ENCODE measurements at regions of chr18 and their contacts with region 1.

Region 1: GRCh38 chr18:59899298-59900221 is at the start of gene PMAIP1:
- DNase-seq: peak; percentile 78 to 93
- H3K4me3 ChIP-seq: peak within 1 kb of the TSS; percentile 66 to 93 (median 76)
- H3K27ac ChIP-seq: peak within 1 kb of the TSS; percentile 92
- H3K4me1 ChIP-seq: peaks cover 4 to 19% (median 8%) of the 10 kb centered on the region in 4 experiments; a peak in 5 of 7 replicates
- H3K27me3 ChIP-seq: peaks cover 0 to 6% (median 0%) of the 10 kb centered on the region in 4 experiments; a peak in 2 of 7 replicates
- CTCF ChIP-seq: no peak
- EP300 ChIP-seq: 0 out of 3 replicates have a peak, but pooled peaks of 1 of the 2 experiments have one; percentile 72
- POLR2A ChIP-seq: peak; percentile 99
- RAD21 ChIP-seq: no peak; a peak in 1 of 4 replicates
- total RNA-seq, gene PMAIP1: 75.1 and 84.1 TPM in 2 replicates

Region 2: DNA sequence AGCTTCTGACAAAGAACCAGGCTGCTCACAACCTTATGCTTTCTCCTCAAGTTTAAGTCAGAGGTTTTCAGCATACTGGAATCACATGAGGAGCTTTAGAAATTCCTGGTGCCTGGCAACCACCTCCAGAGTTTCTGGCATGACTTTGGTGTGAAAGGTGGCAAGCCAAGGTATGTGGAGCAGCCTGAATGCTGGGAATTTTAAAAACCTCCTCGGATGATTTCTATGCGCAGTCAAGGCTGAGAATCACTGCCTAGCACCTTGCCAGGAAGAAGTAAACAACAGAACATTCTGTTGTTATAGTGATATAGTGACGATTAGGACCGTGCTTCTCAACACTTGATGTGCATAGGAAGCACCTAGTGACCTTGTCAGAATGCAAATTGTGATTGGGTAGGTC is 214.1 kb before region 1 on chr18:
- CTCF ChIA-PET with region 1: no interaction called
- POLR2A ChIA-PET with region 1: no interaction called
- DNase-seq: no peak
- H3K4me3 ChIP-seq: no peak overlapping the region
- H3K27ac ChIP-seq: no peak overlapping the region
- H3K4me1 ChIP-seq: peaks cover 2 to 29% (median 15%) of the 10 kb centered on the region in 4 experiments; a peak in 6 of 7 replicates
- H3K27me3 ChIP-seq: peaks cover 0 to 6% (median 0%) of the 10 kb centered on the region in 4 experiments; a peak in 2 of 7 replicates
- CTCF ChIP-seq: no peak
- EP300 ChIP-seq: no peak
- POLR2A ChIP-seq: no peak
- RAD21 ChIP-seq: no peak

Region 3: DNA sequence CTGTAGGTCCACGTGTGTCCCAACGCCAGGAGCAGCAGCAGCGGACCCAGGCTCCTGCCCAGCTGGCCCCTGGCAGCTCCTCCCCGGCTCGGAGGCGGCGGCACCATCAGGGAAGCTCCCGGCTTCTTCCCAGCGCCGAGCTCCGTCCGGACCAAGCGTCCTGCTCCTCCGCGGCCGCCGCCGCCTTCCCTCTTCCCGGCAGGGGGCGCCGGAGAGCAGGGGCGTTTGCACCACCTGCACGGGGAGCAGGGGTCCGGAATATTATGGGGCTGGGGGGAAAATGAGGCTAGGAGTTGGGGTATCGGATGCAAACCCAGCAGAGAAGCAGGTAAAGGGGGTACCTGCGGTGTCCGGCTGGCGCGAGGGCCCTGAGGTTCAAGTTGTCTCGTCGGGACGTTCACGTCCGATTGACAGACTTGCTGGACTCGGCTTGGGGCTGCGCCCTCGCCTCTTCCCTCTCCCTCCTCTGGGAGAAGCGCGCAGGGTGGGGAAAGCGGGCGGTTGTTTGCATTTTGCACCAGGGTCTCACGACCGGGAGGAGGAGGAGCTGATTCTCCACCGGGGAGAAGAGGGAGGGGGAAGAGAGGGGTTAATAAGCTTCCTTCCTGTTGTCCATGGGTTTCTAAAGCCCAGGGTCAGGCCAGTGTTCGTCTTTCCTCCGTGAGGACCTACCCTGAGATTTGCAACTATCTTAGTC is 202.2 kb before region 1 on chr18 and contains the start of gene CCBE1:
- CTCF ChIA-PET with region 1: interaction called, 3 read pairs
- POLR2A ChIA-PET with region 1: interaction called, 13 read pairs
- DNase-seq: peak; percentile 49 to 96
- H3K4me3 ChIP-seq: peak within 1 kb of the TSS; percentile 65 to 80 (median 72)
- H3K27ac ChIP-seq: no peak within 1 kb of the TSS
- H3K4me1 ChIP-seq: peaks cover 7 to 34% (median 15%) of the 10 kb centered on the region in 4 experiments
- H3K27me3 ChIP-seq: peaks cover 7 to 35% (median 31%) of the 10 kb centered on the region in 4 experiments
- CTCF ChIP-seq: peak; percentile 81 to 88 (median 82)
- EP300 ChIP-seq: no peak
- POLR2A ChIP-seq: no peak
- RAD21 ChIP-seq: peak; percentile 55 to 68
- total RNA-seq, gene CCBE1: 2.6 and 4.4 TPM in 2 replicates

Region 4: GRCh38 chr18:59851784-59852399 is 47.7 kb before region 1 on chr18:
- CTCF ChIA-PET with region 1: interaction called, 3 read pairs
- POLR2A ChIA-PET with region 1: interaction called, 13 read pairs
- DNase-seq: no peak
- H3K4me3 ChIP-seq: no peak overlapping the region
- H3K27ac ChIP-seq: no peak overlapping the region
- H3K4me1 ChIP-seq: 0 out of 7 replicates have a peak, but pooled peaks cover 0 to 2% (median 0%) of the 10 kb centered on the region in 4 experiments
- H3K27me3 ChIP-seq: no peaks in the 10 kb centered on the region; a peak in 1 of 7 replicates
- CTCF ChIP-seq: no peak
- EP300 ChIP-seq: no peak
- POLR2A ChIP-seq: no peak
- RAD21 ChIP-seq: no peak

Region 5: GRCh38 chr18:59876310-59876626 is 23.3 kb before region 1 on chr18:
- CTCF ChIA-PET with region 1: interaction called, 3 read pairs
- POLR2A ChIA-PET with region 1: interaction called, 82 read pairs
- DNase-seq: no peak
- H3K4me3 ChIP-seq: no peak overlapping the region
- H3K27ac ChIP-seq: no peak overlapping the region
- H3K4me1 ChIP-seq: peaks cover 0 to 7% (median 4%) of the 10 kb centered on the region in 4 experiments; a peak in 5 of 7 replicates
- H3K27me3 ChIP-seq: no peaks in the 10 kb centered on the region
- CTCF ChIP-seq: no peak
- EP300 ChIP-seq: no peak
- POLR2A ChIP-seq: no peak
- RAD21 ChIP-seq: no peak

Region 6: GRCh38 chr18:59918320-59918755 is 18.8 kb after region 1 on chr18:
- CTCF ChIA-PET with region 1: interaction called, 5 read pairs
- POLR2A ChIA-PET with region 1: interaction called, 47 read pairs
- DNase-seq: peak in 1 of 2 experiments; percentile 44
- H3K4me3 ChIP-seq: no peak overlapping the region
- H3K27ac ChIP-seq: no peak overlapping the region
- H3K4me1 ChIP-seq: peaks cover 0 to 6% (median 2%) of the 10 kb centered on the region in 4 experiments; a peak in 3 of 7 replicates
- H3K27me3 ChIP-seq: no peaks in the 10 kb centered on the region
- CTCF ChIP-seq: no peak
- EP300 ChIP-seq: no peak
- POLR2A ChIP-seq: no peak
- RAD21 ChIP-seq: no peak

Region 7: GRCh38 chr18:59938676-59939075 is 39.1 kb after region 1 on chr18:
- CTCF ChIA-PET with region 1: no interaction called
- POLR2A ChIA-PET with region 1: interaction called, 15 read pairs
- DNase-seq: no peak
- H3K4me3 ChIP-seq: no peak overlapping the region
- H3K27ac ChIP-seq: no peak overlapping the region
- H3K4me1 ChIP-seq: 0 out of 7 replicates have a peak, but pooled peaks cover 0 to 2% (median 0%) of the 10 kb centered on the region in 4 experiments
- H3K27me3 ChIP-seq: no peaks in the 10 kb centered on the region; a peak in 1 of 7 replicates
- CTCF ChIP-seq: no peak
- EP300 ChIP-seq: no peak
- POLR2A ChIP-seq: no peak
- RAD21 ChIP-seq: no peak

Region 8: DNA sequence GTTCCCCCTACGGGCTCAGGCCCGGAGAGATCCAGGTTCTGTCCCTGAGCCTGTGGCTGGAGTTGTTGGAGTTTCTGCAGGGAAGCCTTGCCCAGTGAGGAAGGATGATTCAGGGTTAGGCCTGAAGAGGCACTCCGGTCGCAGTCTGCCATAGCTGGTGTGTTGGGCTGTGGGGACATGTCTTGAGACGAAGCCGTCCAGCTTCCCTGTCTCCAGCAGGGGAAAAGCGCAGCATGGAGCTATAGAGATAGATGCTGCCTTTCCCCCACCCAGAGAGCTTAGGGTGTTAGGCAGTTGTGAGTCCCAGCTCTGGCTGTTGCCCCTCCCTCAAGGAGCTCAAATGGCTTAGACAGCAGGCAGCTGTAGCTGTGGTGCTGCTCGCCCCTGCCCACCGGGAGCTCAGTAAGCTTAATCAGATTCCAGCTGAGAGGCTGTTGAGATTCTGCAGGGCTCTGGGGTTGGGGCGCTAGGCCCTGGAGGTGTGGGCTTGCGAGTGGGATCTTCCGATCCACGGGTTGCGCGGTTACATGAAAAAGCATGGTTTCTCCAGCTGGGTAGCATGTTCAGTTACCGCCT is 104.1 kb after region 1 on chr18:
- CTCF ChIA-PET with region 1: no interaction called
- POLR2A ChIA-PET with region 1: no interaction called
- DNase-seq: no peak
- H3K4me3 ChIP-seq: no peak overlapping the region
- H3K27ac ChIP-seq: no peak overlapping the region
- H3K4me1 ChIP-seq: peaks cover 0 to 2% (median 0%) of the 10 kb centered on the region in 4 experiments; a peak in 1 of 7 replicates
- H3K27me3 ChIP-seq: no peaks in the 10 kb centered on the region
- CTCF ChIP-seq: no peak
- EP300 ChIP-seq: no peak
- POLR2A ChIP-seq: no peak
- RAD21 ChIP-seq: peak in 1 of 2 experiments; percentile 7; a peak in 2 of 4 replicates